ENCODE measurements at regions of chr7 and their contacts with region 1.

Region 1: GRCh38 chr7:100177045-100178001 is at the starts of genes GPC2 and STAG3:
- DNase-seq: peak; percentile 93 to 98 (median 95)
- H3K4me3 ChIP-seq: peak within 1 kb of the TSS; percentile 74
- H3K4me3 Mint-ChIP-seq: peak within 1 kb of the TSS; percentile 44 to 92 (median 74)
- H3K27ac ChIP-seq: no peak within 1 kb of the TSS
- H3K27ac Mint-ChIP-seq: peak within 1 kb of the TSS; percentile 5 to 68 (median 29)
- H3K4me1 ChIP-seq: peaks cover 33% of the 10 kb centered on the region
- H3K4me1 Mint-ChIP-seq: peaks cover 28 to 41% (median 35%) of the 10 kb centered on the region in 3 donors
- H3K27me3 ChIP-seq: no peaks in the 10 kb centered on the region
- H3K27me3 Mint-ChIP-seq: peaks cover 0 to 2% of the 10 kb centered on the region in 2 donors
- total RNA-seq, gene GPC2: 1.6 to 2.1 TPM
- total RNA-seq, gene STAG3: 5.0 to 5.1 TPM

Region 2: DNA sequence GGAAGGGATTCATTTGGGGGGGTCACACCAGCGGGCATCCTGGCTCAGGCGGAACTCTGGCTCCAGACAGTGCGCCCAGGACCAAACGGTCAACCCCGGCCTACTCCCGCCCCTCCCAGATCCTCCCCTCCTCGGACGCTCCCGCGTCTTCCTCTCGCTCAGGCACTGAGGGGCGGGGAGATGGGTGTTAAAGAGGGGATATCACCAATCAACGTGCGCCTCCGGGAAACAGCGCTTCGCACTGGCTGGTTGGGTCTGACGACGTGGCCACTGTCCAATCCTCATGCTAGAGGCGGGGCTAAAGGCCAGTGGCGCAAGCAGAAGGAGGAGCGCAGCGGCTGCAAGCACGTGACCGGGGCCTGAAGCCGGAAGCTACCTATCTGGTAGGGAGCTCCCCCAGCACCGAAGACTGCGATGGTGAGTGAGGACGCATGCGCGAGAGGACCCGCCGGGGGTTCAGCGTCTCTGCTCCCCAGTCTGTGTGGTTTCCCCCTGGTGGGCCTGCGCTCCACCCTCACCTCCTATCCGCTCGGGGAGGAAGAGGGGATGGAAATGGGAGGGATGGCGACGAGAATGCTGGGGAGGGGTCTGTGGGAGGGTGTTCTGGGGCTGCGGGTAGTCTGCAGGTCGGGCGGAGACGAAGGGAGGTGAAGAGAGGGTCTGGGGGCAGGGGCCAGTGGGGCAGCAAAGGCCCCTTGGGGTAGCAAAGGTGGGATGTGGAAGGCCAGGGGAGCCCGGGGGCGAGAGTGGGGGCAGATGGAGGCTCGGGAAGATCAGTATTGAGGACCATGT is 28.6 kb before region 1 on chr7 and contains the start of gene LAMTOR4:
- CTCF ChIA-PET with region 1: interaction called, 4 read pairs
- POLR2A ChIA-PET with region 1: interaction called, 11 read pairs
- DNase-seq: peak; percentile 97 to 99 (median 98)
- H3K4me3 ChIP-seq: peak within 1 kb of the TSS; percentile 83
- H3K4me3 Mint-ChIP-seq: peak within 1 kb of the TSS; percentile 82 to 99 (median 95)
- H3K27ac ChIP-seq: peak within 1 kb of the TSS; percentile 87
- H3K27ac Mint-ChIP-seq: peak within 1 kb of the TSS; percentile 85 to 99 (median 96)
- H3K4me1 ChIP-seq: peaks cover 29% of the 10 kb centered on the region
- H3K4me1 Mint-ChIP-seq: peaks cover 27 to 44% (median 43%) of the 10 kb centered on the region in 3 donors
- H3K27me3 ChIP-seq: no peaks in the 10 kb centered on the region
- H3K27me3 Mint-ChIP-seq: no peaks in the 10 kb centered on the region
- total RNA-seq, gene LAMTOR4: 125 to 130 TPM

Measured in CD8-positive, alpha-beta memory T cell (primary cell).